ENCODE measurements at regions of chr16 and their contacts with region 1.

Region 1: GRCh38 chr16:87540945-87541877 is 48.4 kb upstream of the ZCCHC14 start:
- DNase-seq: peak; percentile 88

Region 2: DNA sequence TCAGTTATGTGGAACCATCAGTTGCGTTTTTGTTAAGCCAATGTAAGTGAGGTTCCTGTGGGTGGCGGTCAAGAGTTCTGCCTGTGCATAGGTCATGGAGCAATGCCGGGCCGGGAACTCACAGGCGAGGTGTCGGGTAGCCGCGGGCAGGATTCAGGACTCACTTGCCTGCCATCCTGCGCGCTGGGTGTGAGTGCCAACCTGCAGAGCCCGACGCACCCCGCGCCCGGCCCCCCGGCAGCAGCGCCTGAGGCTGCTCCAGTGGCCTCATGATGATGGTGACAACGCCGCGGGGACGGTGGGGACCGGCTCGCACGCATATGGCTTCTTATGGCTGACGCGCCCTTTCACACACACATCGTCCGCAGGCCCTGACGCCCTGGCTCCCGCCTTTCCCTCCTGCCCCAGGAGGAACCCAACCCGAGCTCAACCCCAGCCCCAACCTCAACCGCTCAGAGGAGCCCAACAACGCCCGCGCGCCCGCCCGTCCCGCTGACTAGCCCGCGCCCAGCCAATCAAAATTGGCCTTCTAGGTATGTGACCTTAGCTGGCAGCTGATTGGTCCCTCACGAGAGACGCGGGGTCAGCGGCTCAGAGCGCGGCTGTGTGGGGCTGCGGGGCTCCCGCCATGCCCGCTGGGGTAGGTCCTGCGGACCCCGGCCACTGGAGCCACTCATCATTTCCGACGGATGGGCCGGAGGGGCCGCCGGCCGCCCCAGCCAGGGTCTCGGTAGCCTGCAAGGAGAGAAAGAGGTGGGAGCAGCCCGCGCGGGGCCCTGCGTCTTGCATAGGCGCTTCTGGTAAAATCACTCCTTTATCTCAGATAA is 224.1 kb before region 1 on chr16 and contains the start of gene C16orf95:
- intact Hi-C with region 1: loop called in 1 of 2 experiments (anchors 10 kb)
- DNase-seq: peak; percentile 98
- total RNA-seq, gene C16orf95: 1.1 to 3.1 TPM

Region 3: DNA sequence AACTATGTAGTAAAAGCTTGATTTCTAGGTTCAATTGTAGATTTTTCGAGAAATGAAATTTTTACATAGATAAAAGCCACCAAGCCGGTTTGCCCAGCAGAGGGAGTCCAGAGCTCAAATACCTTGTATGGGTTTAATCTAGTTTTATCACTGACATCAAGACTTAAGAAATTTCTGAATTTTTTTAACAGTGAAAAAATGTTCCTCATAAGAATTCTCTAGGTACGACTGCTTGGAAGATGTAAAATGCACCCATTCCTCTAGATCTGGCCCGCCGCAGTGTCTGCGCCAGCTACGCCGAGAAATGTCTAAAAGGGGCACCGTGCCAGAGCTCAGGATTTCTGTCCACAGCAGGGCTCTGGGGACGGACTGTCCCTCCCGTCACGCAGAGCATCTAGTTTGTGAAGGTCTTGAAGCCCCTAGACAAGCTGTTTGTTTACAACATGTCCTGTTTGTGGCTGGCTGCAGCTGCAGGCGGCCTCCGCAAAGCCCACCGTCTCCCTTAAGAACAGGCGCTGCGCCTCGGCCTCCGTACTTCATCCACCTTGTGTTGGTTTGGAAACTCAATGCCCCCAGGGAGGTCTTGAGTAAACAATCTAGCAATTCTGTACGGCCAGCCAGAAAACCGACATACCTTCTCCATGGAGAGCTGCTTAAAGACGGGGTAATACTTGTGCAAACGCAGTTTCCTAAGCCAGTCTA is 124.2 kb before region 1 on chr16:
- intact Hi-C with region 1: loop called in 1 of 2 experiments (anchors 5 kb)
- DNase-seq: peak; percentile 82

Measured in posterior vena cava (tissue), 2 donors.